ENCODE measurements at regions of chr11 and their contacts with region 1.

Region 1: DNA sequence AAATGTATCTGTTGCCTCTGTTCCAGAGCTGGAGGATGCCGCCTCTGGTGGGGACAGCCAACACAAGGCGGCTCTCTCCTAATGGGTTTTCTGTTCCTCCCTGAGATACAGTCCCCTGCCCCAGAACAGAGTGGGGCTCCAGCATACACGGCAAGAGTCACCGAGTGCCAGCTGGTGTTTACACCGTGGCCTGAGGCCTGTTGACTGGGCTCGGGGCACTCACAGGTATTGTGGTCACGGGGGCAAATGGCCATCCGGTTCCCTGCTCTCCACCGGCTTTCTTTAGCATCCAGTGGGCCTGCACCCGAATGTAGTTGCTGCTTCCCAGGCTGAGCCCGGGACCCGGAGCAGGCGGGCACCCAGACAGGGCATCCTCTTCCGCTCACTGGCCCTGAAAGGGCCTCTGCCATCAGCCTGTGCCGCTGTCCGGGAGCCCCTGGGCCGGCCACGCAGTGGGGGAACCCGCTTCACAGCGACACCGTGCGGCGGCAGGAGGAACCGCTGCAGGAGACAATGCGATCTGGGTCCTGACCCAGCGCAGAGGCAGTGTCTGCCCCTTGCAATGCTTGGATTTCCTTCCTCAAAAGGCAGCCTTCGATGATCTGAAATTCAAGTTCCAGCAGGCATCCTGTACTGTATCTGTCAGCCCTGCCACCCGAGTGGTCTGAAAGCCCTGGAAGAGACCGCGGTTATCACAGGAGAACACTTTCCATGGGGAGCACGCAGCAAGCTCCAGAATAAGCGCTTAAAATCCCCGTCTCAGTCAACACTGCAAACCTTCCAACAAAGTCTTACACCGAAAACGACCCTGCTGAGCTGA is 859 bp upstream of the KRTAP5-5 start:
- DNase-seq: peak; percentile 44 to 78
- ATAC-seq: peak; percentile 84 to 95 (median 90)
- H3K4me3 ChIP-seq: no peak overlapping the region
- H3K27ac ChIP-seq: no peak overlapping the region
- H3K4me1 ChIP-seq: no peaks in the 10 kb centered on the region
- H3K27me3 ChIP-seq: peaks cover 0 to 31% (median 2%) of the 10 kb centered on the region in 3 donors
- CTCF ChIP-seq: peak; percentile 88

Region 2: GRCh38 chr11:1541474-1542204 is 87.1 kb before region 1 on chr11:
- intact Hi-C with region 1: loop called (anchors 2 to 5 kb)
- DNase-seq: no peak
- ATAC-seq: no peak
- H3K4me3 ChIP-seq: no peak overlapping the region
- H3K27ac ChIP-seq: no peak overlapping the region
- H3K4me1 ChIP-seq: peaks cover 3% of the 10 kb centered on the region
- H3K27me3 ChIP-seq: peaks cover 0 to 6% (median 0%) of the 10 kb centered on the region in 3 donors
- CTCF ChIP-seq: no peak

Measured in psoas muscle (tissue), 8 donors.